CD4-positive, alpha-beta memory T cell (primary cell): ENCODE measurements at regions of chr1 and their contacts with region 1.

Region 1: GRCh38 chr1:235328357-235329138 is at the start of gene GGPS1:
- DNase-seq: peak; percentile 95 to 99 (median 98)
- H3K4me3 ChIP-seq: peak within 1 kb of the TSS; percentile 88 to 93
- H3K4me3 Mint-ChIP-seq: no peak within 1 kb of the TSS
- H3K27ac ChIP-seq: peak within 1 kb of the TSS; percentile 99
- H3K27ac Mint-ChIP-seq: peak within 1 kb of the TSS in 3 of 7 donors; percentile 90 to 93 (median 90)
- H3K4me1 ChIP-seq: peaks cover 73% of the 10 kb centered on the region
- H3K4me1 Mint-ChIP-seq: peaks cover 32 to 39% (median 35%) of the 10 kb centered on the region in 4 donors
- H3K27me3 ChIP-seq: no peaks in the 10 kb centered on the region
- H3K27me3 Mint-ChIP-seq: no peaks in the 10 kb centered on the region
- total RNA-seq, gene GGPS1: 50.3 to 52.5 TPM

Region 2: GRCh38 chr1:235128456-235129328 is 199.9 kb before region 1 on chr1 and contains the start of gene TOMM20:
- CTCF ChIA-PET with region 1: interaction called, 3 read pairs
- POLR2A ChIA-PET with region 1: interaction called, 5 read pairs
- intact Hi-C with region 1: loop called (anchors 1 kb)
- DNase-seq: peak; percentile 95 to 97 (median 96)
- H3K4me3 ChIP-seq: peak within 1 kb of the TSS; percentile 64 to 83
- H3K4me3 Mint-ChIP-seq: peak within 1 kb of the TSS; percentile 89 to 98 (median 97)
- H3K27ac ChIP-seq: peak within 1 kb of the TSS; percentile 94
- H3K27ac Mint-ChIP-seq: peak within 1 kb of the TSS; percentile 95 to 99 (median 97)
- H3K4me1 ChIP-seq: peaks cover 41% of the 10 kb centered on the region
- H3K4me1 Mint-ChIP-seq: peaks cover 19 to 51% (median 32%) of the 10 kb centered on the region in 4 donors
- H3K27me3 ChIP-seq: no peaks in the 10 kb centered on the region
- H3K27me3 Mint-ChIP-seq: no peaks in the 10 kb centered on the region
- total RNA-seq, gene TOMM20: 102 to 108 TPM

Region 3: DNA sequence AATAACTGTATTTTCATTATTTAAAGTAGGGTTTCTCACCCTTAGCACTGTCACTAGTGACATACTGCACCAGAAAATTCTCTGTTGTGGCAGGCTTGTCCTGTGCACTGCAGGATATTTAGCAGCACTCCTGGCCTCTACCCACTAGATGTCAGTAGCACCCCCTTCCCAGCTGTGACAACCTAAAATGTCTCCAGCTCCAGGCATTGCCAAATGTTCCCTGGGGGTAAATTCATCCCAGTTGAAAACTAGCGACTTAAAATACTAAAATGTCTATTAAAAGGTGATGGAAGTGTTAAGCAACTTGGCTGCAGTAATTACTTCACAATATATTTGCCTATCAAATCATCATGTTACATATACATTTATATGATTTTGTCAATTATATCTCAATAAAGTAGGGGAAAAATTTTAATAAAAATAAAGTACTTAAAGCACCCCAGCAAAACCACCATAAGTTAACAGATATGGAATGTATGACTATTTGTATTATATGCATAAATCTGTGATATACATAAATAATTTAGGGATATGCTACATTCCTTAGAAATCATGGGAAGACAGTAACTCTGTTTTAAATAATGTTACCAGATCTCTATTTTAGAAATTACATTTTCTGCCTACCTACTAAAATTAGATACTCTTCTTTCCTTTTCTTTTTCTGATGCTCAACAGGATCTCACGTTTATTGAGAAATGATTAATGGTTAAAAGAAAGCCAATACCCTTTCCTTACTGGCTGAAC is 75.2 kb before region 1 on chr1:
- CTCF ChIA-PET with region 1: interaction called, 4 read pairs
- POLR2A ChIA-PET with region 1: interaction called, 3 read pairs
- intact Hi-C with region 1: loop called (anchors 1 kb)
- DNase-seq: peak; percentile 58 to 71 (median 66)
- H3K4me3 ChIP-seq: no peak overlapping the region
- H3K4me3 Mint-ChIP-seq: no peak overlapping the region
- H3K27ac ChIP-seq: no peak overlapping the region
- H3K27ac Mint-ChIP-seq: peak overlapping the region; percentile 35 to 86 (median 70)
- H3K4me1 ChIP-seq: peaks cover 36% of the 10 kb centered on the region
- H3K4me1 Mint-ChIP-seq: peaks cover 24 to 46% (median 30%) of the 10 kb centered on the region in 4 donors
- H3K27me3 ChIP-seq: no peaks in the 10 kb centered on the region
- H3K27me3 Mint-ChIP-seq: no peaks in the 10 kb centered on the region

Region 4: GRCh38 chr1:235297579-235297978 is 31.0 kb before region 1 on chr1:
- CTCF ChIA-PET with region 1: no interaction called
- POLR2A ChIA-PET with region 1: interaction called, 4 read pairs
- intact Hi-C with region 1: loop called (anchors 1 kb)
- DNase-seq: peak; percentile 53 to 91 (median 86)
- H3K4me3 ChIP-seq: peak overlapping the region in 1 of 2 donors; percentile 2
- H3K4me3 Mint-ChIP-seq: peak overlapping the region; percentile 58 to 86 (median 80)
- H3K27ac ChIP-seq: peak overlapping the region; percentile 86
- H3K27ac Mint-ChIP-seq: peak overlapping the region; percentile 84 to 99 (median 96)
- H3K4me1 ChIP-seq: peaks cover 83% of the 10 kb centered on the region
- H3K4me1 Mint-ChIP-seq: peaks cover 37 to 64% (median 51%) of the 10 kb centered on the region in 4 donors
- H3K27me3 ChIP-seq: no peaks in the 10 kb centered on the region
- H3K27me3 Mint-ChIP-seq: no peaks in the 10 kb centered on the region

Region 5: DNA sequence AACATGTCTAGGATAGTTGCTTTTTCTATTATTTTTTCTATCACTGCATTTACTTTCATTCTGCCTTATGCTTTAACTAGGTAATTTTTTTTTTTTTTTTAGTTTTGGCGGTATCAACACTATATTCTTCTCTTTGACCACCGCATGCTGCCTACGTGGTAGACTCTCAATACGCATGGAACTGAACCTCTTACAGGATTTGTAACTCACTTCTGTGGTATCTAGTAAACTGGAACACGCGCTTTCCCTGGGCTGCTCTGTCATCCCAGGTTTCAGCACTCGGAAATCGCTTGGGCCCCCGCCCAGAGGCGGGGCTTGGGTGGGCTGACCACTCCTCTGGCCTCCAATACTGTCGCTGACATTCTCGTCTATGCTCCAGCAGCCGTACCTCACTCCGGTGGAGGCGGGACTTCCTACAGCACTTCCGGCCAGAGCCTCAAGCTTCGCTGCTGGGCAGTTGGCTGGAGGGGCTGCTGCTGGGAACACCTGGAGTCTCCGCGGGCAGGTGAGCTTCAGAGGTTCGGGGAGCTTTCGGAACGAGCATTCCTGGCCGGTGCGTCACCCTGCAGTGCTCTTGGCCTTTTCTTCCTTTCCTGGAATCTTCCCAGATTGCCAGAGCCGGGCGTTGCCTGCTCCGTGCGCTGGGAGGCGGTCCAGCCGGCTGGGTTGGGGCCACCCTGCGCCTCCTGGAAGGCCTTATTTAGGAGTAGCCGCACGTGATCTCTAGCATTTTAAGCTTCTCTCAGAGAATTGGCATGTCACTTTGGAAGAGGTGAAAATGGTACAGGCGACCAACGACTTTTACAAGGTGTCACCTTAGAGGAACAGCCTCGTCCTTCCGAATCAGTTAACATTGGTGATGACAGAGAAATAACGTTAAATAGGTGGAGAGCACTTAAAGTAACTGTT is 38.7 kb after region 1 on chr1 and contains the start of gene TBCE:
- CTCF ChIA-PET with region 1: interaction called, 8 read pairs
- POLR2A ChIA-PET with region 1: interaction called, 5 read pairs
- intact Hi-C with region 1: loop called (anchors 1 kb)
- DNase-seq: peak; percentile 74 to 82 (median 76)
- H3K4me3 ChIP-seq: peak within 1 kb of the TSS; percentile 59 to 67
- H3K4me3 Mint-ChIP-seq: peak within 1 kb of the TSS; percentile 97 to 100 (median 98)
- H3K27ac ChIP-seq: peak within 1 kb of the TSS; percentile 71
- H3K27ac Mint-ChIP-seq: peak within 1 kb of the TSS; percentile 84 to 98 (median 95)
- H3K4me1 ChIP-seq: peaks cover 20% of the 10 kb centered on the region
- H3K4me1 Mint-ChIP-seq: peaks cover 17 to 43% (median 31%) of the 10 kb centered on the region in 4 donors
- H3K27me3 ChIP-seq: no peaks in the 10 kb centered on the region
- H3K27me3 Mint-ChIP-seq: no peaks in the 10 kb centered on the region
- total RNA-seq, gene TBCE: 17.0 to 17.5 TPM

Region 6: GRCh38 chr1:235397733-235398132 is 69.2 kb after region 1 on chr1:
- CTCF ChIA-PET with region 1: no interaction called
- POLR2A ChIA-PET with region 1: no interaction called
- intact Hi-C with region 1: no loop called
- DNase-seq: no peak
- H3K4me3 ChIP-seq: no peak overlapping the region
- H3K4me3 Mint-ChIP-seq: no peak overlapping the region
- H3K27ac ChIP-seq: no peak overlapping the region
- H3K27ac Mint-ChIP-seq: no peak overlapping the region
- H3K4me1 ChIP-seq: no peaks in the 10 kb centered on the region
- H3K4me1 Mint-ChIP-seq: peaks cover 3 to 17% (median 6%) of the 10 kb centered on the region in 4 donors
- H3K27me3 ChIP-seq: no peaks in the 10 kb centered on the region
- H3K27me3 Mint-ChIP-seq: no peaks in the 10 kb centered on the region